Left colon (tissue), 2 donors: ENCODE measurements at regions of chr6 and their contacts with region 1.

Region 1: DNA sequence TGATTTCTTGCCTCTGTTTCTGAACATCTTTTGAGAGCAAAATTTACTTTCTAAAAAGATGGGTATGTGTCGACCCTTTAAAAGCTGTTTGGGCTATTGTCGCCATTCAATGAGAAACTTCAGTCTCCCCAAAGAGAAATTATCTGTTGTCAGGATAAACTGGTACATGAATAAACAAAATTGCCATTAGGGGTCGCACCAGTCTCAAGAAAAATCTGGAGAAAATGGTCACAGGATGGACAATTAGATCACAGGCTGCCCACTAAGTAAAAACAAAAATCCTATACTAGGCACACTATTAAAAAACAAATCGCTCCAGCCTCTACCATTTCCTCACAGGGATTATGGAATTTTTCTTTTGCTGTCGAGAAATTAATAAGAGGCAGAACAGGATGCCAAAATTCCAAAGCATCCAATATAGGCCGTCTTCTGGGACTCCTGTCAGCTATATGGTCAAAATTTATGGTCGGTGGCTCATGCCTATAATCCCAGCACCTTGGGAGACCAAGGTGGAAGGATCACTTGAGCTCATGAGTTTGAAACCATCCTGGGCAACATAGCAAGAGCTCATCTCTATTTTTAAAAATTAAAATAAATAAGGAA is 5.5 kb upstream of the HLA-E start:
- DNase-seq: no peak
- ATAC-seq: peak; percentile 48

Region 2: DNA sequence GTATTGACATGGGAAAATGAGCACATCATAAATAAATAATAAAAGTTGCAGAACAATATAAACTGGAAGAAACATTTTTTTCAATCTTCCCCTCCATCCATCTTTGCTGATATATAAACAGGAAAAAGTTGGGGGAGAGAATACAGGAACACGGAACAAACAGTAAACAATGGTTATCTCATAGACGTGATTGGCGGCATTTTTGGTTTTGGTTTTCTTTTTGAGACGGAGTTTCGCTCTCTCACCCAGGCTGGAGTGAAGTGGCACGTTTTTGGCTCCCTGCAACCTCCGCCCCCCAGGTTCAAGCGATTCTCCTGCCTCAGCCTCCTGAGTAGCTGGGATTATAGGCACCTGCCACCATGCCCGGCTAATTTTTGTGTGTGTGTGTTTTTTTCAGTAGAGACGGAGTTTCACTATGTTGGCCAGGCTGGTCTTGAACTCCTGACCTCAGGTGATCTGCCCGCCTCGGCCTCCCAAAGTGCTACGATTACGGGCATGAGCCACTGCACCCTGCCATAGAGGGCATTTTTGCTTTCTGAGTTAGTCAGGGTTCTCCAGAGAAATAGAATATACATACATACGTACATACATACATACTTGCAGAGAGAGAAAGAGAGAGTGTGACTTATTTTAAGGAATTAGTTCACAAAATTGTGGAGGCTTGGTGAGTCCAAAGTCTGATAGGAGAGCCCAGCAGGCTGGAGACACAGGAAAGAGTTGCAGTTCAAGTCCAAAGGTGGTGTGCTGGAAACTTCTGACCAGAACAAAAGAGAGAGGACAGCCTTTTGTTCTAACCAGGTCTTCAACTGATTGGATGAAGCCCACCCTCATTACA is 49.9 kb after region 1 on chr6:
- intact Hi-C with region 1: loop called in 1 of 2 experiments (anchors 5 kb)
- DNase-seq: no peak
- ATAC-seq: peak; percentile 77